CD14-positive monocyte (primary cell): ENCODE measurements at regions of chr21 and their contacts with region 1.

Region 1: GRCh38 chr21:44817506-44817880 is 369 bp downstream of the SUMO3 start:
- DNase-seq: peak; percentile 79 to 90 (median 90)
- H3K4me3 ChIP-seq: peak overlapping the region; percentile 48 to 79 (median 51)
- H3K4me3 Mint-ChIP-seq: peak overlapping the region; percentile 67 to 68
- H3K27ac ChIP-seq: peak overlapping the region in 1 of 2 donors; percentile 91
- H3K27ac Mint-ChIP-seq: peak overlapping the region in 1 of 7 donors; percentile 16
- H3K4me1 ChIP-seq: peaks cover 11 to 25% of the 10 kb centered on the region in 2 donors
- H3K4me1 Mint-ChIP-seq: peaks cover 20% of the 10 kb centered on the region
- H3K27me3 ChIP-seq: no peaks in the 10 kb centered on the region
- H3K27me3 Mint-ChIP-seq: peaks cover 2 to 7% (median 5%) of the 10 kb centered on the region in 3 donors
- CTCF ChIP-seq: no peak

Region 2: DNA sequence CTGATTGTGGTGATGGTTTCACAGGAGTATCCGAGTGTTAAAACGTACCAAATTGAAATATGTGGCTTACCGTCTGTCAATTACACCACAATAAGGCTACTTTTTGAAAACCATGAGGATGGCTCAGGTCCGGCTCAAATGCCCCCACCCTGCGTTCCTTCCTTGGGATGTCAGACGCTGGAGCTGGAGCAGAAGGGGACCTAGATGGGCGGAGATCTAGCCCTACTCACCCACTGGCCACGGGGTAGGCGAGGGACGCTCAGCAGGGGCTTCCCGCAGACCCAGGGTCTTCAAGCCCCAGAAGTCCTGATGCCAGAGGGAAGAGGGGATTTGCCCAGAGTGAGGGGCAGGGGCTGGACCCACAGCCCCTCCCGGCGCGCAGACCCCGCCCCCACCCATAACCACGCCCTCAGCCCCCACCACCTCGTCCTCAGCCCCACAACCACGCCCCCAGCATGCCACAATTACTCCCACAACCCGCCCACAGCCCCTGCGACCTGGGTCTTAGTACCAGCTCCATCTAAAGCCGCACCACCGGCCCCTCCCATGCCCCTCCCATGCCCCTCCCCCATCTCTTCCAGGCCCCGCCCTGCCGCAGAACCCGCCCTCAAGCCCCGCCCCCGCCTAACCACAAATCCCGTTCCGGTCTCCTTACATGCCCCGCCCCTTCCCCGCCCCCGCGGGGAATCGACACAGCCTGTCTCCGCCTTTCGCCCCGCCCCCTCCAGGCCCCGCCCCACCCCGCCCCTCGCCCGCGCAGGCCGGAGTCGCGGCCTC is 362.6 kb before region 1 on chr21 and contains the start of gene LRRC3:
- intact Hi-C with region 1: loop called in 1 of 2 experiments (anchors 10 kb)
- DNase-seq: peak; percentile 78 to 85 (median 78)
- H3K4me3 ChIP-seq: peak within 1 kb of the TSS; percentile 38 to 88 (median 50)
- H3K4me3 Mint-ChIP-seq: peak within 1 kb of the TSS; percentile 86 to 89
- H3K27ac ChIP-seq: no peak within 1 kb of the TSS
- H3K27ac Mint-ChIP-seq: peak within 1 kb of the TSS in 2 of 7 donors; percentile 63 to 77
- H3K4me1 ChIP-seq: peaks cover 6 to 13% of the 10 kb centered on the region in 2 donors
- H3K4me1 Mint-ChIP-seq: peaks cover 11% of the 10 kb centered on the region
- H3K27me3 ChIP-seq: peaks cover 0 to 9% of the 10 kb centered on the region in 2 donors
- H3K27me3 Mint-ChIP-seq: peaks cover 14 to 48% (median 19%) of the 10 kb centered on the region in 3 donors
- CTCF ChIP-seq: no peak
- polyA plus RNA-seq, gene LRRC3: 0.30 to 0.59 (median 0.41) TPM

Region 3: GRCh38 chr21:44854664-44855446 is 37.4 kb after region 1 on chr21:
- intact Hi-C with region 1: loop called in 1 of 2 experiments (anchors 5 kb)
- DNase-seq: peak in 1 of 3 donors; percentile 26
- H3K4me3 ChIP-seq: no peak overlapping the region
- H3K4me3 Mint-ChIP-seq: peak overlapping the region in 1 of 2 donors; percentile 4
- H3K27ac ChIP-seq: no peak overlapping the region
- H3K27ac Mint-ChIP-seq: peak overlapping the region; percentile 33 to 78 (median 74)
- H3K4me1 ChIP-seq: peaks cover 17 to 21% of the 10 kb centered on the region in 2 donors
- H3K4me1 Mint-ChIP-seq: peaks cover 40% of the 10 kb centered on the region
- H3K27me3 ChIP-seq: no peaks in the 10 kb centered on the region
- H3K27me3 Mint-ChIP-seq: no peaks in the 10 kb centered on the region
- CTCF ChIP-seq: no peak

Region 4: DNA sequence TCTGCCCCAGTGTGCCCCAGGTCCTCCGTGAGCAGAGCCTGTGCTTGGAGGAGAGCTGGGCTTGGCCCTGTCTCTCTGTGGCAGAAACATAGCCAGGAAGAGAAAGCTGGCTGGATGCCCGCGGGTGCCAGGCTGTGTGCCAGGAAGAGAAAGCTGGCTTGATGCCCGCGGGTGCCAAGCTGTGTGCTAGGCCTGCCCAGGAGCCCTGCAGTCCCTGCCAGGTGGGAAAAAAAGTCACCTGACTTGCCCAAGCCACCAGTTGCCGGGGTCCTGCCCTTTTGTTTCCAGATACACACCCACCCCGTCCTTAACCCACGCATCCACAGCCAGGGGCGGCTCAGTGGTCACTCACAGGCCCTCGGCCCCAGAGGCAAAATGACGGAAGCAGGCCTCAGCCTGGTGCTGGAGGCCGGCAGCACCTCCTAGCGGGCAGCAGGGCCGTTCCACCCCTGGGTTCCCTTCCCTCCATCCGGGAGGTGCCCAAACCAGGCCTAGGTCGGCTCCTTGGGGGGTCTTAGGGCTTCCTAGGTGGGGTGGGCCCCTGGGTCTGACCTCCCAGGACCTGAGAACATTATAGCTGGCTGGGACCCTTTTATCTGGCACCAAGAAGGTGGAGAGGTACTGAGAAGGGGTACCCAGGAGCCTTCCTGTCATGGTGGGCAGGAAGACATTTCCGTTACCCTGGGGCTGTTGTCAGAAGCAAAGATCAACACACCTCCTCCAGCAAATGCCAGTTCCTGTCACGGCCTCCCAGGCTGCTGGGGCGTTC is 94.1 kb after region 1 on chr21:
- intact Hi-C with region 1: loop called in 1 of 2 experiments (anchors 5 kb)
- DNase-seq: peak; percentile 67 to 78 (median 74)
- H3K4me3 ChIP-seq: peak overlapping the region; percentile 1 to 98 (median 11)
- H3K4me3 Mint-ChIP-seq: peak overlapping the region; percentile 70 to 88
- H3K27ac ChIP-seq: peak overlapping the region; percentile 69 to 81
- H3K27ac Mint-ChIP-seq: peak overlapping the region; percentile 74 to 92 (median 87)
- H3K4me1 ChIP-seq: peaks cover 99 to 100% of the 10 kb centered on the region in 2 donors
- H3K4me1 Mint-ChIP-seq: peaks cover 89% of the 10 kb centered on the region
- H3K27me3 ChIP-seq: no peaks in the 10 kb centered on the region
- H3K27me3 Mint-ChIP-seq: peaks cover 0 to 2% (median 2%) of the 10 kb centered on the region in 3 donors
- CTCF ChIP-seq: peak; percentile 93

Region 5: GRCh38 chr21:45080639-45081414 is 263.3 kb after region 1 on chr21:
- intact Hi-C with region 1: loop called in 1 of 2 experiments (anchors 10 kb)
- DNase-seq: no peak
- H3K4me3 ChIP-seq: no peak overlapping the region
- H3K4me3 Mint-ChIP-seq: no peak overlapping the region
- H3K27ac ChIP-seq: no peak overlapping the region
- H3K27ac Mint-ChIP-seq: no peak overlapping the region
- H3K4me1 ChIP-seq: peaks cover 22 to 27% of the 10 kb centered on the region in 2 donors
- H3K4me1 Mint-ChIP-seq: peaks cover 34% of the 10 kb centered on the region
- H3K27me3 ChIP-seq: peaks cover 5 to 9% of the 10 kb centered on the region in 2 donors
- H3K27me3 Mint-ChIP-seq: peaks cover 9 to 32% (median 14%) of the 10 kb centered on the region in 3 donors
- CTCF ChIP-seq: no peak